ENCODE measurements at regions of chr17 and their contacts with region 1.

Region 1: GRCh38 chr17:75515496-75516254 is at the start of gene CASKIN2:
- DNase-seq: peak; percentile 88
- ATAC-seq: peak; percentile 77
- H3K4me3 ChIP-seq: peak within 1 kb of the TSS; percentile 87 to 91
- H3K27ac ChIP-seq: peak within 1 kb of the TSS; percentile 86
- H3K4me1 ChIP-seq: peaks cover 28 to 60% of the 10 kb centered on the region in 2 experiments
- H3K27me3 ChIP-seq: no peaks in the 10 kb centered on the region
- CTCF ChIP-seq: peak; percentile 100
- POLR2A ChIP-seq: no peak
- RAD21 ChIP-seq: peak; percentile 94
- total RNA-seq, gene CASKIN2: 38.4 TPM

Region 2: DNA sequence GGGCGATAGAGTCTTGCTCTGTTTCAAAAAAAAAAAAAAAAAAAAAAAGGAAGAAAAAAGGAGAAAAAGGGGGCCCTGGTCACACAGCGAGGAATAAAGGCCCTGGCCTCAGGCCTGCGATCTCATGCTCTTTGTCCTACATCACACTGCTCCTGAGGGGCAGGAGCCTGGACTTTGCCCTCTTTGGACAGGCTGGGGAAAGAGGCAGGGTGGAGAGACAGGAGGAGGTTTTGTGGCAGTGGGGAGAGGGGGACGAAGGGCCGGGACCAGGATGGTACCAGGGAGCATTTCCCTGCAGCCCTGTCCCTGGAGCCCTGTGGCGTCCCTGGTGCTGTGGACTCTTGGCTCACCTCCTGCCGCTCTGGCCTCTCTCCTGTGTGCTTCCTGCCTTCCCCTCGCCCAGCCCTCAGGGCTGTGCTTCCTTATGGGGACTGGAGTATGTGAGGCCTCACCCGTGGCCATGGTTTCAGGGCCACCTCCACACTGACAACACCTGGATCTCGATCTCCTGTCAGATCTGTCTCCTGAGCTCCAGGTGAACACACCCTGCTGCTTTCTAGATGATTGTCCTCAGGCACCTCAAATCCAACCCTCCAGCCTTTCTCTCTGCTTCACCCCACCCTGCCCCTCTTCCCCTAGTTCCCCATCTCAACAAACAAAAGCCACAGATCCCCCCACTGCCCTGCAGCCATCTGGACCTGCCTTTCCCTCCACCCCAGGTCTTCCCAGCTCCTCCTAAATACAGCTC is 206.5 kb before region 1 on chr17:
- CTCF ChIA-PET with region 1: no interaction called
- POLR2A ChIA-PET with region 1: no interaction called
- RAD21 ChIA-PET with region 1: no interaction called
- intact Hi-C with region 1: no loop called
- DNase-seq: no peak
- ATAC-seq: peak; percentile 47; the same call in 1 of the 2 replicates
- H3K4me3 ChIP-seq: no peak overlapping the region
- H3K27ac ChIP-seq: no peak overlapping the region; the same call in 1 of the 2 replicates
- H3K4me1 ChIP-seq: peaks cover 7 to 21% of the 10 kb centered on the region in 2 experiments
- H3K27me3 ChIP-seq: no peaks in the 10 kb centered on the region
- CTCF ChIP-seq: no peak
- POLR2A ChIP-seq: no peak
- RAD21 ChIP-seq: no peak

Region 3: GRCh38 chr17:75430159-75430974 is 85.3 kb before region 1 on chr17:
- CTCF ChIA-PET with region 1: interaction called, 5 read pairs
- POLR2A ChIA-PET with region 1: no interaction called
- RAD21 ChIA-PET with region 1: no interaction called
- intact Hi-C with region 1: loop called (anchors 2 kb)
- DNase-seq: no peak
- ATAC-seq: peak; percentile 66
- H3K4me3 ChIP-seq: peak overlapping the region in 1 of 2 experiments; percentile 43; a peak in 2 of 4 replicates
- H3K27ac ChIP-seq: peak overlapping the region; percentile 48; the same call in 1 of the 2 replicates
- H3K4me1 ChIP-seq: peaks cover 33 to 46% of the 10 kb centered on the region in 2 experiments
- H3K27me3 ChIP-seq: no peaks in the 10 kb centered on the region
- CTCF ChIP-seq: no peak
- POLR2A ChIP-seq: no peak
- RAD21 ChIP-seq: no peak

Region 4: DNA sequence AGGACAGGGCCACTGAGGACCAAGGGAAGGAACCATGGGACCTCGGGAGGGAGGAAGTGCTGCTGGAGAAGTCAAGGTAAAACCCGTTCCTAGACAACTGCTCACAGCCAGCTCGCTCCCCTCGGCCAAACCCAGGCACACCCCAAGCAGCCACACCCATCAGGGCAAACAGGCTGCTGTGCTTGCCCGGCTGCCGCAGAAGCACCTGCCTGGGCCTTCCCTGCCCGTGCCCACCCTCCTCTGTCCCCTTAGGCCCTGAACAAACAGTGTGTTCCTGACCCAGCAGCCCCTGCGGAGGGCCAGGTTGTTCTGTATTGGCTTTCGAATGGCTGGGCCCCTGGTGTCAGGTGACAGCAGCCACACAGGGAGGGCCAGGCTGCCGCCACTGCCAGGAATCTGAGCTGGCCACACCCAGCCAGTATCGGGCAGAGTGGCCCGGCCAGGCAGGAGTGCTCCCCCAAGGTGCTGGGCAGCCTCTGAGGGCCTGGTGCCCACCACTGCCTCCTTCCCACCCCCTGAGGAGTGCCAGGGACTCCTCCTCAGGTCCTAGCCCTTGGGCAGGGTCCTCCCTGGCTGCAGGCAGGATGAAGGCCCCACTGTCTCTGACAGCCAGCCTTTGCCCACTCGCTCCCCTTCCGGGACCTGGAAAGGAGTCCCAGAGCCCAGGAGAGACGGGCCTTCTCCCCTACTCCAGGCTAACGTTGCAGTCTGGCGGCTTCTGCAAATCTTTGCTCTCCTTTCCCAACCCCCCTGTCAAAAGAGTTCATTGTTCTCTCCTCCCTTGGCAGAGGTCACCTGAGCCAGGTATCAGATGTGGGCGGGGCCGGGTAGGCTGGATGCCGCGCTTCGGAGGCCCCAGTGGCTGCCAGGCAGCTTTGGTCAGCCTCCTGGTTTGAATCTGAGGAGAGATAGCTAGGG is 33.8 kb after region 1 on chr17:
- CTCF ChIA-PET with region 1: interaction called, 9 read pairs
- POLR2A ChIA-PET with region 1: interaction called, 3 read pairs
- RAD21 ChIA-PET with region 1: interaction called in 1 of 2 experiments, 10 read pairs
- intact Hi-C with region 1: no loop called
- DNase-seq: peak; percentile 63
- ATAC-seq: peak; percentile 94
- H3K4me3 ChIP-seq: peak overlapping the region; percentile 50 to 58
- H3K27ac ChIP-seq: peak overlapping the region; percentile 95
- H3K4me1 ChIP-seq: peaks cover 33 to 39% of the 10 kb centered on the region in 2 experiments
- H3K27me3 ChIP-seq: no peaks in the 10 kb centered on the region
- CTCF ChIP-seq: no peak
- POLR2A ChIP-seq: peak; percentile 76
- RAD21 ChIP-seq: no peak; the same call in 1 of the 2 replicates

Measured in HCT116 (cell line).